ENCODE measurements at regions of chr6 and their contacts with region 1.

Region 1: GRCh38 chr6:151323791-151324487 is 67.4 kb downstream of the ZBTB2 start:
- DNase-seq: peak; percentile 83
- ATAC-seq: peak; percentile 90
- H3K4me3 Mint-ChIP-seq: no peak overlapping the region
- H3K27ac Mint-ChIP-seq: no peak overlapping the region
- H3K4me1 Mint-ChIP-seq: peaks cover 20% of the 10 kb centered on the region
- H3K27me3 Mint-ChIP-seq: peaks cover 31% of the 10 kb centered on the region

Region 2: DNA sequence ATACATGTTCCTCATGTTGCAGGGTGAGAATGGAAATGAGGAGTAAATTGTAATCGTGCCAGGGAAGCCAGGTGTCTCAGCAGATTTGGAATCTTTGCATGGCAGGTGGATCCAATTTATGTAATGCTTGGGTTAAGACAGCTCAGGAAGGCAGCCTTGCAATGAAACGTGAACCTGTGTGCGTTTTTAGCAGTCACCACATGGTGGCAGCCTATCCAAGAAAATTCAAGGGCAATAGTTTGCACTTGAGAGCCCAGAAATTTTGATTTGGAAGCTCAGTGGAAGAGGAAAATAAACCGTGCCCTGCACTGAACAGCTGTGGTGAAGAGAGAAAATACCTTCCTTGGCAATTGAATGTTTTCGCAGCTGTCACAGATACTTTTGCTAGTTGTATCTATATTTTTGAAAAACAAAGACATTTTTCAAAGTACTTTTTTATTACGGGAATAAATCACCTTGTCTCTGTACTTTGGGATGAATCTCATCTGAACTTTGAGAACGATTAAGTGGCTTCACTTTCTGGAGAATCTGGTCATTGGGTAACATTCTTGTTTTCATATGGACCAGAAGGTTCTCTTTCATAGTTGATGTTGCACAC is 432.0 kb before region 1 on chr6:
- CTCF ChIA-PET with region 1: interaction called, 78 read pairs
- POLR2A ChIA-PET with region 1: no interaction called
- intact Hi-C with region 1: loop called (anchors 1 kb)
- DNase-seq: peak; percentile 70
- ATAC-seq: peak; percentile 39
- H3K4me3 Mint-ChIP-seq: no peak overlapping the region
- H3K27ac Mint-ChIP-seq: no peak overlapping the region
- H3K4me1 Mint-ChIP-seq: peaks cover 31% of the 10 kb centered on the region
- H3K27me3 Mint-ChIP-seq: no peaks in the 10 kb centered on the region

Region 3: GRCh38 chr6:151004415-151005024 is 319.4 kb before region 1 on chr6:
- CTCF ChIA-PET with region 1: interaction called, 11 read pairs
- POLR2A ChIA-PET with region 1: no interaction called
- intact Hi-C with region 1: no loop called
- DNase-seq: no peak
- ATAC-seq: peak; percentile 80
- H3K4me3 Mint-ChIP-seq: no peak overlapping the region
- H3K27ac Mint-ChIP-seq: peak overlapping the region; percentile 81
- H3K4me1 Mint-ChIP-seq: peaks cover 34% of the 10 kb centered on the region
- H3K27me3 Mint-ChIP-seq: no peaks in the 10 kb centered on the region

Region 4: DNA sequence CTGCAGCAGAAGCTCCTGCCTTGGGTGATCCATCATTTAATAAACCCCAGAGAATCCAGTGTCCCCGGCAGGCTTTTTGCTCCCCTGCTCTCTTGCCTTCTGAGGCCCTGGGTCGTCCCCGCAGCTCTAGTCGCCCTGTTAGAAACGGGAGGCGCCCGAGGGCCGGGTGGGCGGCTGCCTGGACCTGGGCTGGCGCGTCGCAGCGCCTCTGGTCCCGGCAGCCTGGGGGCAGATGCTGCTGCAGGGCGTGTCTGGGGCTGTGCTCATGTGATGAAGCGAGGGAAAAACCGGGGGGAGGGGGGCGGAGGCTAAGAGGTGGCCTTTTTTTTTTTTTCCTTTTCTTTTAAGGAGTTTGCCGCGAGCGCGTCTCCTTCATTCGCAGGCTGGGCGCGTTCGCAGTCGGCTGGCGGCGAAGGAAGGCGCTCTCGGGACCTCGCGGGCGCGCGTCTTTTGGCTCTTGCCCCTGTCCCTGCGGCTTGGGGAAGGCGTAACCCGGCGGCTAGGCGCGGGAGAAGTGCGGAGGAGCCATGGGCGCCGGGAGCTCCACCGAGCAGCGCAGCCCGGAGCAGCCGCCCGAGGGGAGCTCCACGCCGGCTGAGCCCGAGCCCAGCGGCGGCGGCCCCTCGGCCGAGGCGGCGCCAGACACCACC is 83.8 kb before region 1 on chr6:
- CTCF ChIA-PET with region 1: interaction called, 12 read pairs
- POLR2A ChIA-PET with region 1: no interaction called
- intact Hi-C with region 1: loop called in 1 of 2 experiments (anchors 1 kb)
- DNase-seq: peak; percentile 79
- ATAC-seq: peak; percentile 92
- H3K4me3 Mint-ChIP-seq: peak overlapping the region; percentile 79
- H3K27ac Mint-ChIP-seq: no peak overlapping the region
- H3K4me1 Mint-ChIP-seq: peaks cover 3% of the 10 kb centered on the region
- H3K27me3 Mint-ChIP-seq: peaks cover 62% of the 10 kb centered on the region

Region 5: DNA sequence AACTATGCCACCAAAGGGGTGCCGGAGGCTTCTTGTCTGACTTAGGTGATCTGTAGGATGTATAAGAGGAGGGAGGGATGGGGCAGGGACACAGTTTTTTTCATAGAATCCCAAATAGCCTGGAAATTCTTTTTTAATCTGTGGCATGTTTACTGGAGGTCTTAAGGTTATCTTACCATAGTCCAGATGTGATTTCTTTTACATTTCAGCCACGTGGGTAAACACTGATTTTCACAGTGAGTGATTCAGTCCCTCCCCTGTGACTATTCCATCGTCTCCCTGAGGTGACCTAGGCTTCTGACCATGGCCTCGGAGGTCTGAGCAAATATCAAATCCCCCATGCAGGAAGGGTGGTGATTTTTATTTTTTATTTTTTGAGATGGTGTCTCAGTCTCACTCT is 16.4 kb before region 1 on chr6:
- CTCF ChIA-PET with region 1: interaction called, 22 read pairs
- POLR2A ChIA-PET with region 1: no interaction called
- intact Hi-C with region 1: no loop called
- DNase-seq: no peak
- ATAC-seq: no peak
- H3K4me3 Mint-ChIP-seq: no peak overlapping the region
- H3K27ac Mint-ChIP-seq: no peak overlapping the region
- H3K4me1 Mint-ChIP-seq: no peaks in the 10 kb centered on the region
- H3K27me3 Mint-ChIP-seq: no peaks in the 10 kb centered on the region

Region 6: GRCh38 chr6:151335930-151336329 is 12.0 kb after region 1 on chr6:
- CTCF ChIA-PET with region 1: interaction called, 67 read pairs
- POLR2A ChIA-PET with region 1: no interaction called
- intact Hi-C with region 1: no loop called
- DNase-seq: no peak
- ATAC-seq: no peak
- H3K4me3 Mint-ChIP-seq: no peak overlapping the region
- H3K27ac Mint-ChIP-seq: no peak overlapping the region
- H3K4me1 Mint-ChIP-seq: no peaks in the 10 kb centered on the region
- H3K27me3 Mint-ChIP-seq: no peaks in the 10 kb centered on the region

Region 7: GRCh38 chr6:151440930-151441329 is 117.0 kb after region 1 on chr6:
- CTCF ChIA-PET with region 1: no interaction called
- POLR2A ChIA-PET with region 1: no interaction called
- intact Hi-C with region 1: no loop called
- DNase-seq: no peak
- ATAC-seq: no peak
- H3K4me3 Mint-ChIP-seq: no peak overlapping the region
- H3K27ac Mint-ChIP-seq: peak overlapping the region; percentile 12
- H3K4me1 Mint-ChIP-seq: peaks cover 26% of the 10 kb centered on the region
- H3K27me3 Mint-ChIP-seq: no peaks in the 10 kb centered on the region

Region 8: GRCh38 chr6:152232501-152233151 is 908.7 kb after region 1 on chr6:
- CTCF ChIA-PET with region 1: no interaction called
- POLR2A ChIA-PET with region 1: no interaction called
- intact Hi-C with region 1: no loop called
- DNase-seq: peak; percentile 57
- ATAC-seq: peak; percentile 69
- H3K4me3 Mint-ChIP-seq: peak overlapping the region; percentile 66
- H3K27ac Mint-ChIP-seq: peak overlapping the region; percentile 80
- H3K4me1 Mint-ChIP-seq: peaks cover 26% of the 10 kb centered on the region
- H3K27me3 Mint-ChIP-seq: no peaks in the 10 kb centered on the region